ENCODE measurements at regions of chr2 and their contacts with region 1.

Region 1: DNA sequence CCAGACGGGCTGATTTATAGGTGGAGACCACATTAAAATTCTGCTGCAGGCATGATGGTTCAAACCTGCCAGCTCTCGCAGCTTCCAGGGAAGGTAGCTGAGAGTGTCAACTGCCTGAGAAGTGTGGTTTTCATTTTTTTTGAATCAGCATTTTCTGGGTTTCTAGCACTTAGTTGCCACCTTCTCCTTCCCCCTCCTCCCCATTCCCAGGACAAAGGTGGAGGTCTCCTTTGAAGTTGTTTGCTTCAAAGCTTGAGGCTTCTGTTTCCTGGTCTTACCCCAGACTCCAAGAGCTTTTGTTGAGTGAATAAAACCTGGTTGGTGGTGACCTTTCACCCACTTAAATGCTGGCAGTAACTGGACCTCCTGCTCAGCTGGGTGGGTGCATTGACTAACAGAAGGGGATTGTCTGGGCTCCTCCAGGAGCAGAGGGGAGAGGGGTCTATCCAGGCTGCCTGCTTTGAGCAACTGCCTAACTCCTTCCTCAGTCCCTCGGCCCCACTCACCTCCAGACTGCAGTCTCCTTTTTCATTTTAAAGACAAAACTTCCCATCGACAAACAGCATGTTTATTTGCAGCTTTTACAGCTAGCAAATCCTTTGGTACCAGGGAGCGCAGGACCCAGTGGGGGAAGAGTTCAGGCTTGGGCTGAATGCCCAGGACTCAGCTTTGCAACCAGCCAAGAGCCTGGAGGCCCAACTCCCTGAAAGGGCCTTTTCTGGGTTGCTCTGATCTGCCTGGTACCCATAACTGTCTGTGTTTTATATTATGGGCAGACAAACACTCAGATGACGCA is 3.5 kb downstream of the RHOB start:
- DNase-seq: peak; percentile 94
- H3K4me3 ChIP-seq: peak overlapping the region; percentile 95
- H3K27ac ChIP-seq: peak overlapping the region; percentile 89
- H3K4me1 ChIP-seq: peaks cover 28% of the 10 kb centered on the region
- H3K27me3 ChIP-seq: no peaks in the 10 kb centered on the region

Region 2: DNA sequence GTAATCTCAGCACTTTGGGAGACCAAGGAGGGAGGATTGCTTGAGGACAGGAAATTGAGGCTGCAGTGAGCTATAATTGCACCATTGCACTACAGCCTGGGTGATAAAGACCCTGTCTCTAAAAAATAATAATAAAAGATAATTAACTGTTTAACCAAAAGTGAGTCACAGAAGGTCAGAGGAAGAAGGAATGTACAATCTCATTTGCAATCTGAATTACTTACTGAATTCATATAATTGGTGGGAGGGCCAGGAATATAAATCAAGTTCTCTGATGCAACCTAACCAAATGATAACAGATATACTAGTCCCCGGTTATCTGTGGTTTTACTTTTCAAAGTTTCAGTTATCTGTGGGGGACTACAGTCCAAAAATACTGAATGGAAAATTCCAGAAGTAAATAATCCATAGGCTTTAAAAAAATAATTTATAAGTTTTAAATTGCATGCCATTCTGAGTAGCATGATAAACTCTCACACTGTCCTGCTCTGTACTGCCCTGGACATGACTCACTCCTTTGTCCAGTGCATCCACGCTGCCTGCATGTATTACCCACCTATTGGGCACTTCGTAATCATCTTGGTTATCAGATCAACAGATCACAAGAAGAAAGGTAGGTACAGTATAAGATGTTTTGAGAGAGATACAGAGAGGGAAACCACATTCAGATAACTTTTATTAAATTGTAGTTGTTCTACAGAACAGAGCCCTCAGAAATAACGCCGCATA is 425.2 kb before region 1 on chr2:
- in situ Hi-C with region 1: no loop called
- DNase-seq: peak; percentile 48
- H3K4me3 ChIP-seq: no peak overlapping the region
- H3K27ac ChIP-seq: no peak overlapping the region
- H3K4me1 ChIP-seq: peaks cover 18% of the 10 kb centered on the region
- H3K27me3 ChIP-seq: no peaks in the 10 kb centered on the region

Region 3: GRCh38 chr2:20135631-20136050 is 314.8 kb before region 1 on chr2:
- in situ Hi-C with region 1: no loop called
- DNase-seq: peak; percentile 82
- H3K4me3 ChIP-seq: no peak overlapping the region
- H3K27ac ChIP-seq: no peak overlapping the region
- H3K4me1 ChIP-seq: peaks cover 9% of the 10 kb centered on the region
- H3K27me3 ChIP-seq: no peaks in the 10 kb centered on the region

Region 4: GRCh38 chr2:20525041-20526035 is 74.9 kb after region 1 on chr2:
- in situ Hi-C with region 1: no loop called
- DNase-seq: peak; percentile 89
- H3K4me3 ChIP-seq: no peak overlapping the region
- H3K27ac ChIP-seq: no peak overlapping the region
- H3K4me1 ChIP-seq: peaks cover 9% of the 10 kb centered on the region
- H3K27me3 ChIP-seq: no peaks in the 10 kb centered on the region

Region 5: GRCh38 chr2:20635675-20636584 is 185.5 kb after region 1 on chr2:
- in situ Hi-C with region 1: loop called (anchors 10 kb)
- DNase-seq: peak; percentile 92
- H3K4me3 ChIP-seq: 0 out of 2 replicates have a peak overlapping the region, but pooled peaks have one; percentile 11
- H3K27ac ChIP-seq: no peak overlapping the region
- H3K4me1 ChIP-seq: peaks cover 11% of the 10 kb centered on the region; the same call in 1 of the 2 replicates
- H3K27me3 ChIP-seq: no peaks in the 10 kb centered on the region

Measured in GM23248 (cell line).